Lower leg skin (tissue), 4 donors: ENCODE measurements at regions of chrX and their contacts with region 1.

Region 1: GRCh38 chrX:123964151-123964834 is 2.8 kb downstream of the STAG2 start:
- DNase-seq: no peak
- H3K4me3 ChIP-seq: no peak overlapping the region
- CTCF ChIP-seq: no peak
- POLR2A ChIP-seq: no peak

Region 2: DNA sequence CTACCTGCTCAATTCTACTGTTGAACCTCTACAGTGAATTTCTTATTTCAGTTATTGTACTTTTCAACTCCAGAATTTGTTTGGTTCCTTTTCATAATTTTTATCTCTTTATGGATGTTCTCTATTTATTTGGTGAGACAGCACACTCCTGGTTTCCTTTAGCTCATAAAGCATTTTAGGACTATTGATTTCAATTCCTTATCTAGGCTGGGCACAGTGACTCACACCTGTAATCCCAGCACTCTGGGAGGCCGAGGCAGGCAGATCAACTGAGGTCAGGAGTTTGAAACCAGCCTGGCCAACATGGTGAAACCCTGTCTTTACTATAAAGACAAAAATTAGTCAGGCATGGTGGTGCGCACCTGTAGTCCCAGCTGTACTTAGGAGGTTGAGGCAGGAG is 289.1 kb before region 1 on chrX:
- intact Hi-C with region 1: no loop called
- DNase-seq: no peak
- H3K4me3 ChIP-seq: no peak overlapping the region
- CTCF ChIP-seq: no peak
- POLR2A ChIP-seq: no peak

Region 3: GRCh38 chrX:123779908-123780396 is 184.3 kb before region 1 on chrX:
- intact Hi-C with region 1: no loop called
- DNase-seq: no peak
- H3K4me3 ChIP-seq: no peak overlapping the region
- CTCF ChIP-seq: no peak
- POLR2A ChIP-seq: no peak

Region 4: GRCh38 chrX:123860983-123861382 is 103.3 kb before region 1 on chrX:
- intact Hi-C with region 1: loop called (anchors 1 kb)
- DNase-seq: no peak
- H3K4me3 ChIP-seq: no peak overlapping the region
- CTCF ChIP-seq: no peak
- POLR2A ChIP-seq: no peak